ENCODE measurements at regions of chr6 and their contacts with region 1.

Region 1: GRCh38 chr6:133916650-133917151 is 27.8 kb downstream of the TCF21 start:
- DNase-seq: peak; percentile 35
- ATAC-seq: peak; percentile 88
- H3K4me3 ChIP-seq: no peak overlapping the region
- H3K27ac ChIP-seq: no peak overlapping the region
- H3K4me1 ChIP-seq: no peaks in the 10 kb centered on the region
- H3K27me3 ChIP-seq: no peaks in the 10 kb centered on the region
- CTCF ChIP-seq: peak; percentile 85 to 89 (median 88)
- EP300 ChIP-seq: no peak
- POLR2A ChIP-seq: no peak
- RAD21 ChIP-seq: peak; percentile 87

Region 2: DNA sequence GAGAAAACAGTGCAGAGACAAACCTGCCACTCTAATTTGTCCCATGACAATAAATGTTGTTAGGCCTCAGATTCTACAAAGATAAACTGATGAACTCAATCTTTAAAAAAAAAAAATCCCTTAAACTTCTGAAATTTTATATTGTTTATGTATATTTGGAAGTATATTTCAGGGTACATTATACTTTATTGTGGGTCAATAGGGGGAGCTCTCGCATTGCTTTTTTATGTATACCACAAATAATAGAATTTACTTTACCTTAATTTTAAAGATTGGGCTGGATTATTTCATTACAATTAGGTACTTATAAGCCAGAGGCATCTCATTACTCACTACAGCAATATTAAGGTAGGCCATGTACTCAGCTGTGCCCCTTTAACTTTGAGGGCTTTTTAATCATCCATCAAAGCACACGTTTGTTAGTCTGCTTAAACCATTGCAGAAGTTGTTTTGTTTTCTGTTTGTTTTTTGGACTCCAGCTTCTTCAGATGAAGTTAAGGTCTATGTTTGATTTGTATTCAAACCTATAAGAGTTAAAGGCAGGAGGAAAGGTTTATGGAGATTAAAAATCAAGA is 731.8 kb before region 1 on chr6:
- CTCF ChIA-PET with region 1: interaction called, 6 read pairs
- POLR2A ChIA-PET with region 1: no interaction called
- RAD21 ChIA-PET with region 1: no interaction called
- SMC1A ChIA-PET with region 1: no interaction called
- in situ Hi-C with region 1: no loop called
- intact Hi-C with region 1: loop called (anchors 5 kb)
- DNase-seq: no peak
- ATAC-seq: no peak
- H3K4me3 ChIP-seq: no peak overlapping the region
- H3K27ac ChIP-seq: no peak overlapping the region
- H3K4me1 ChIP-seq: no peaks in the 10 kb centered on the region
- H3K27me3 ChIP-seq: no peaks in the 10 kb centered on the region; a peak in 1 of 4 replicates
- CTCF ChIP-seq: peak; percentile 31 to 47 (median 43); a peak in 3 of 6 replicates
- EP300 ChIP-seq: no peak
- POLR2A ChIP-seq: no peak
- RAD21 ChIP-seq: peak; percentile 27; the same call in 1 of the 2 replicates

Region 3: GRCh38 chr6:133568970-133569889 is 347.5 kb before region 1 on chr6:
- CTCF ChIA-PET with region 1: interaction called, 10 read pairs
- POLR2A ChIA-PET with region 1: no interaction called
- RAD21 ChIA-PET with region 1: no interaction called
- SMC1A ChIA-PET with region 1: interaction called, 5 read pairs
- in situ Hi-C with region 1: loop called (anchors 10 kb)
- intact Hi-C with region 1: loop called (anchors 2 kb)
- DNase-seq: no peak
- ATAC-seq: peak; percentile 55
- H3K4me3 ChIP-seq: no peak overlapping the region
- H3K27ac ChIP-seq: no peak overlapping the region
- H3K4me1 ChIP-seq: no peaks in the 10 kb centered on the region
- H3K27me3 ChIP-seq: no peaks in the 10 kb centered on the region
- CTCF ChIP-seq: peak; percentile 43 to 59 (median 55)
- EP300 ChIP-seq: no peak
- POLR2A ChIP-seq: no peak
- RAD21 ChIP-seq: peak; percentile 63

Region 4: DNA sequence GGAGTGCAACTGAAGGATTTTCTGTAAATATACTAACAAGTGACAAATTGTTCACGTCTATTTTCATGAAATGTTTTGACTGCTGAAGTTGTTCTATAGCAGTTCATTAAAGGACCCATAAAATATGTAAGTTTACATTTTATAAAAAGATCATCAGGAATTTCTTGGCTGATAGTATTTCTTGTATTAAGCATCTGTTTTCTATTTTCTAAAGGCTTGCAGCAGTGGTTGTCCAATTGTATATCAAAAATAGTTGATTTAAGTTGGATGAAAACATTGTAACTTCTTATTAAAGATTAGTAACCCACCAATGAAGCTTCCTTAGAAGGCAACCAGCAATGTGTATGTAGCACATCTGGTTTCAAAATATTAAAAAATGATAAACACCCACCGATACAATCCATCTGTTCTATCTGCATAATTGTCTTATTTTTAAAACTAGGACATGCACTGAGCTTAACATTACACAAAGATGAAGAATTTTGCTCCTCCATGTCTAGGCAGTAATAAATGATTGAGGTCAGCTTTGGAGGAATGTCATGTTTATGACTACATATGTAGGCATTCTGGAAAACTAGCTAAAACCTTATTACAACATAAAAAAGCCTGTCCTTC is 329.0 kb before region 1 on chr6:
- CTCF ChIA-PET with region 1: no interaction called
- POLR2A ChIA-PET with region 1: no interaction called
- RAD21 ChIA-PET with region 1: no interaction called
- SMC1A ChIA-PET with region 1: no interaction called
- in situ Hi-C with region 1: no loop called
- intact Hi-C with region 1: no loop called
- DNase-seq: no peak
- ATAC-seq: no peak
- H3K4me3 ChIP-seq: no peak overlapping the region
- H3K27ac ChIP-seq: no peak overlapping the region
- H3K4me1 ChIP-seq: no peaks in the 10 kb centered on the region
- H3K27me3 ChIP-seq: no peaks in the 10 kb centered on the region; a peak in 1 of 4 replicates
- CTCF ChIP-seq: no peak
- EP300 ChIP-seq: no peak
- POLR2A ChIP-seq: no peak
- RAD21 ChIP-seq: no peak

Region 5: DNA sequence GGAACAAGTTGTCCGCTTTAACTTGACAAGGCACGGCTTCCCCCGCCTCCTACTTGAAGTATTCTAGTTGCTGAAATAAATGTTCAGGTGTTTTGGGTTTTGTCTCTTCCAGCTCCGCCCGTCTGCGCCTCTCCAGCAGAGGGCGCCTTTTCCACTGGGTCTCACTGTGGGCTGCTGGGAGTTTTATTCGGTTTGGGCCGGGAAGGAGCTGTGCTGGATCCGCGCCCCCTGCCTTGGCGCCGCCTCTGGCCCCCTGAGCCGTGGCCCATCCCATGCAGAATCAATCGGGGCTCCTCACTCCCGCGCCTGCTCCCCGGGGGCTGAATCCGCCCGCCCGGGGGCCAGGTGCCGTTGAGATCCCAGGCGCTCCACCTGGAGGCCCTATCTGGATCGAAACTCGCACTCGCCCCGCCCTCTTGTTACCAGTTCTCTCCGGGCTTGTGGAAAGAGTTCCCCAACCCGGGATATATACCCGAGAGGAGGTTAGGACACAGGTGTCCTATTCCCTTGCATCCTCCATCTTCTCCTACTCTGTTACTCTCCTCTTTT is 78.8 kb before region 1 on chr6:
- CTCF ChIA-PET with region 1: interaction called, 36 read pairs
- POLR2A ChIA-PET with region 1: no interaction called
- RAD21 ChIA-PET with region 1: interaction called, 8 read pairs
- SMC1A ChIA-PET with region 1: interaction called, 13 read pairs
- in situ Hi-C with region 1: no loop called
- intact Hi-C with region 1: loop called (anchors 1 kb)
- DNase-seq: no peak
- ATAC-seq: peak; percentile 95
- H3K4me3 ChIP-seq: peak overlapping the region; percentile 41; the same call in 1 of the 2 replicates
- H3K27ac ChIP-seq: no peak overlapping the region
- H3K4me1 ChIP-seq: no peaks in the 10 kb centered on the region
- H3K27me3 ChIP-seq: no peaks in the 10 kb centered on the region
- CTCF ChIP-seq: peak; percentile 65 to 80 (median 70)
- EP300 ChIP-seq: no peak
- POLR2A ChIP-seq: no peak
- RAD21 ChIP-seq: peak; percentile 41

Region 6: GRCh38 chr6:133906050-133906449 is 10.7 kb before region 1 on chr6:
- CTCF ChIA-PET with region 1: interaction called, 65 read pairs
- POLR2A ChIA-PET with region 1: no interaction called
- RAD21 ChIA-PET with region 1: no interaction called
- SMC1A ChIA-PET with region 1: interaction called, 6 read pairs
- in situ Hi-C with region 1: no loop called
- intact Hi-C with region 1: no loop called
- DNase-seq: no peak
- ATAC-seq: no peak
- H3K4me3 ChIP-seq: no peak overlapping the region
- H3K27ac ChIP-seq: no peak overlapping the region
- H3K4me1 ChIP-seq: no peaks in the 10 kb centered on the region
- H3K27me3 ChIP-seq: peaks cover 3 to 5% of the 10 kb centered on the region in 2 experiments; a peak in 2 of 4 replicates
- CTCF ChIP-seq: no peak
- EP300 ChIP-seq: no peak
- POLR2A ChIP-seq: no peak
- RAD21 ChIP-seq: no peak

Region 7: DNA sequence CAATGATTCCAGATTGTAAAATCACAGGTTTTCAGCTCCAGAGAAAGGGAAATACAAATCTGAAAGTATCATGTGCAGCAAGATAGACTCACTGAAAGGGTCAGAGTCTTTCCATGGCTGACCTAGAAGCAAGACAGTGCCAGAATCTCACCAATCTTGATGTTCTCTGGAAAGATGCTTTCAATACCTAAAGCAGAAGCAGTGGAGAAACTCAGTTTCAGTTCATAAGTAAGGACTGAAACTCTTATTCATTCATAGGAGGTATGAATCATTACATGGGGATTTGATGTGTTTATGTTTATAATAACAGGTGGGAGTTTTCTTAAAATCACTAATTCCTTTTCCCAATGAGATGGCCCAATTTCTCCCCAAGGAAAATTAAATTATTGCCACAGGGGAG is 93.2 kb after region 1 on chr6:
- CTCF ChIA-PET with region 1: no interaction called
- POLR2A ChIA-PET with region 1: no interaction called
- RAD21 ChIA-PET with region 1: no interaction called
- SMC1A ChIA-PET with region 1: no interaction called
- in situ Hi-C with region 1: no loop called
- intact Hi-C with region 1: no loop called
- DNase-seq: no peak
- ATAC-seq: no peak
- H3K4me3 ChIP-seq: no peak overlapping the region
- H3K27ac ChIP-seq: no peak overlapping the region
- H3K4me1 ChIP-seq: no peaks in the 10 kb centered on the region
- H3K27me3 ChIP-seq: no peaks in the 10 kb centered on the region; a peak in 2 of 4 replicates
- CTCF ChIP-seq: no peak
- EP300 ChIP-seq: no peak
- POLR2A ChIP-seq: no peak
- RAD21 ChIP-seq: no peak

Region 8: GRCh38 chr6:134103006-134103405 is 186.3 kb after region 1 on chr6:
- CTCF ChIA-PET with region 1: interaction called, 276 read pairs
- POLR2A ChIA-PET with region 1: no interaction called
- RAD21 ChIA-PET with region 1: interaction called, 133 read pairs
- SMC1A ChIA-PET with region 1: interaction called, 187 read pairs
- in situ Hi-C with region 1: loop called (anchors 5 kb)
- intact Hi-C with region 1: no loop called
- DNase-seq: no peak
- ATAC-seq: no peak
- H3K4me3 ChIP-seq: no peak overlapping the region
- H3K27ac ChIP-seq: no peak overlapping the region
- H3K4me1 ChIP-seq: no peaks in the 10 kb centered on the region
- H3K27me3 ChIP-seq: no peaks in the 10 kb centered on the region
- CTCF ChIP-seq: no peak
- EP300 ChIP-seq: no peak
- POLR2A ChIP-seq: no peak
- RAD21 ChIP-seq: no peak

Measured in GM12878 (cell line).